Activated B cell treated with CpG ODN at 0.5 μM for 24 hours (primary cell): ENCODE measurements at regions of chr9 and their contacts with region 1.

Region 1: GRCh38 chr9:21110708-21111576 is 30.7 kb downstream of the IFNW1 start:
- DNase-seq: no peak
- ATAC-seq: peak; percentile 71
- H3K4me3 Mint-ChIP-seq: no peak overlapping the region
- H3K27ac Mint-ChIP-seq: no peak overlapping the region
- H3K4me1 Mint-ChIP-seq: no peaks in the 10 kb centered on the region
- H3K27me3 Mint-ChIP-seq: peaks cover 5% of the 10 kb centered on the region
- CTCF ChIP-seq: no peak

Region 2: DNA sequence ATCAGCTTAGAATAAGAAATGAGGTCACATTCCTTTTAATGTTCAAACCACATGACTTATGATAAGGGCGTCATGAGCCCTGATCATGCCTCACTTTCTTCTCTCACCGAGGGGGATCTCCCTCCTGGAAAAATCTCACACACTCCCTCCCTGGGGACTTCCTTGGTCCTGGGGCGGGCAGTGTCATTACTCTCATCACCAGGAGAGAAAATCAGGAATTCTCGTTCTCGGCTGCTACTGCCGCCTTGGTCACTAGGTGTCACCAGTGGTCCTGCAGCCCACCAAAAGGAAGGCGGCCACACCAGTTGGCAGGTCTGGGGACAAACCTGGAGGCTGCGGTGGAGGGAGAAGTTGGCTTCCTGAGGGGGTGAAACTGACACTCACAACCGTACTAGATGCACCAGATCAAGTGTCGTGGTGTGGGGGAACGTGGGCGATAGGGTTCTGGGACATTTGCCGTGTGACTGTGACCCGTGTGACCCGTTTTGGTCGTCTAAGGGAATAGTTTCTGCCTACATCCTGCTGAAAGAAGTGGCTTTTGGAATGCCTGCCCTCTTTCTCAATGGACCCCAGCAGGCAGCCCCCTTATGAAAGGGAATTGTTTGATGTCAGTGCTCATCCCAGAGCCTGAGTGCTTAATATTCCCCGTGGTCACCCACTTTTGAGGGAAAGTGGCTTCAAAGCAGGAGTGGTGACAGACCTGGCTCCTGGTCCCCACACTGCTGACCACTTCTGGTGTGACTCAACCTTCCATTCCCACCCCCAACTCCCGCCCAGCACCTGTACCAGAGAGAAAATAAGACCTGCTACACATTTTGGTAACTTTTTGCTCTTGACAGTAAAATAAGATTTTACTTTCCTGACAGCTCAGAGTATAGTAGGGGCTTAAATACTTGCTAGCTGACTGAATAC is 1638.9 kb before region 1 on chr9:
- CTCF ChIA-PET with region 1: interaction called, 3 read pairs
- POLR2A ChIA-PET with region 1: no interaction called
- intact Hi-C with region 1: loop called (anchors 2 kb)
- DNase-seq: no peak
- ATAC-seq: peak; percentile 79
- H3K4me3 Mint-ChIP-seq: peak overlapping the region; percentile 78
- H3K27ac Mint-ChIP-seq: no peak overlapping the region
- H3K4me1 Mint-ChIP-seq: peaks cover 4% of the 10 kb centered on the region
- H3K27me3 Mint-ChIP-seq: no peaks in the 10 kb centered on the region
- CTCF ChIP-seq: no peak

Region 3: GRCh38 chr9:19925817-19926503 is 1185.0 kb before region 1 on chr9:
- CTCF ChIA-PET with region 1: interaction called, 48 read pairs
- POLR2A ChIA-PET with region 1: no interaction called
- intact Hi-C with region 1: loop called (anchors 1 kb)
- DNase-seq: peak; percentile 37
- ATAC-seq: peak; percentile 99
- H3K4me3 Mint-ChIP-seq: peak overlapping the region; percentile 49
- H3K27ac Mint-ChIP-seq: no peak overlapping the region
- H3K4me1 Mint-ChIP-seq: peaks cover 11% of the 10 kb centered on the region
- H3K27me3 Mint-ChIP-seq: peaks cover 19% of the 10 kb centered on the region
- CTCF ChIP-seq: no peak

Region 4: DNA sequence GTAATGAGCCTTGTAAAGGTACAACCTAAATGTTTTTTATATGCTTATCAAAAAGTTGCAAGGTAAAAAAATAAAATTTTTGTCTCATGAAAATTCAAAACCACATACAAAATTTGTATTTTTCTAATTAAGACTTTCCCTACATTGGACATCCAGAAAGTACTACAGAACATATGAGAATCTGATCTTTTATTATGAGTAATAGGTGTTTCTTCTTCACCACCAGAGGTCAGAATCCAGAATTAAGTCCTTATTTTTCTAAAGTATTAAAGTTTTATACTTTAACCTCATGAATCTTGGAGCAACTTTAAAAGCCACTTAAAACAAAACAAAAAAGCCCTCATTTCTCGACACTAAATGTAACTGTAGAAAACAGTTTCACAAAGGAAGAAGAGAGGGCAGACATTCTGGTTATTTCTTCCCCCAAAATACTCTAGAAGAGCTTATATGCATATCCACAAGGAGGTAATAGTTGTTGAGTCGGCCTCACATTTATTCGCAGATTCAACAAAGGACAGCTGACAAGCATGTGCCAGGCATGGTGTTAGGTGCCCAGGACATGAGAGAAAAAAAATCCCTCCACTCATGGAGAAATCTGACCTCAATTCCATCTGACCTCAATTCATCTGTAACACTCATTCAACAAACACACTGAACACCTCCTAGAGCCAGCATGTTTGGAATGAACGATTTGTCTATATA is 557.9 kb before region 1 on chr9:
- CTCF ChIA-PET with region 1: no interaction called
- POLR2A ChIA-PET with region 1: no interaction called
- intact Hi-C with region 1: loop called (anchors 2 kb)
- DNase-seq: no peak
- ATAC-seq: no peak
- H3K4me3 Mint-ChIP-seq: no peak overlapping the region
- H3K27ac Mint-ChIP-seq: no peak overlapping the region
- H3K4me1 Mint-ChIP-seq: peaks cover 11% of the 10 kb centered on the region
- H3K27me3 Mint-ChIP-seq: peaks cover 1% of the 10 kb centered on the region
- CTCF ChIP-seq: no peak

Region 5: GRCh38 chr9:21078717-21079116 is 32.2 kb before region 1 on chr9:
- CTCF ChIA-PET with region 1: interaction called, 21 read pairs
- POLR2A ChIA-PET with region 1: no interaction called
- intact Hi-C with region 1: no loop called
- DNase-seq: no peak
- ATAC-seq: no peak
- H3K4me3 Mint-ChIP-seq: no peak overlapping the region
- H3K27ac Mint-ChIP-seq: no peak overlapping the region
- H3K4me1 Mint-ChIP-seq: peaks cover 3% of the 10 kb centered on the region
- H3K27me3 Mint-ChIP-seq: peaks cover 2% of the 10 kb centered on the region
- CTCF ChIP-seq: no peak

Region 6: DNA sequence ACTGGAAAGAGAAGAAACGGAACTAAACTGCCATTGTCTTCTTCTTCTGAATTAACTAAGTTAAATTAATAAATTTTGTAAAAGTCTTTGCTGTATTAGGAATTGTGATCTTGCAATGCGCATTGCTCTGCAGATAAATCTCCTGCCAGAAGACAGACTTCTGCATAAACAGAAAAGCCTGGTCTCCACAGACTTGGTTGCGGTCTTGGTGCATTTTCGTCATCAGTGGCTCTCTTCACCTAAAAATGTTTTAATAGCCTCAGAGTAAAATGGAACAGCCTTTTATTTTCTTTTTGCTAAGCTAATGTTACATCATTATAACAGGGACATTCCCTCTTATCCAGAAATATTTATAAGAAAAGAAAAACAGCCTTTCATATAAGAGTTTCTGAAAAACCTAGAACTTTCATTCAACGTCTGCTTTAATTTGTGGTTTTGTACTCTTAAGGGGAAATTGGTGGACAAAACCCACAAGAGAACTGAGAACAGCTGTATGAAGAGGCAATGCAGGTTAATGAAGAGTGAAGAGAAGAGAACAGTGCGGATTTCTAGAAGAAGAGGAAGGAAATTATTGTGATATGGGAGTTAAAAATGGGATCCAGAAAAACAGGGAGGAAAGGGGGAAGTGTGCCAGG is 184.1 kb after region 1 on chr9:
- CTCF ChIA-PET with region 1: no interaction called
- POLR2A ChIA-PET with region 1: no interaction called
- intact Hi-C with region 1: no loop called
- DNase-seq: no peak
- ATAC-seq: peak; percentile 37
- H3K4me3 Mint-ChIP-seq: no peak overlapping the region
- H3K27ac Mint-ChIP-seq: no peak overlapping the region
- H3K4me1 Mint-ChIP-seq: peaks cover 14% of the 10 kb centered on the region
- H3K27me3 Mint-ChIP-seq: peaks cover 4% of the 10 kb centered on the region
- CTCF ChIP-seq: no peak